Activated CD4-positive, alpha-beta T cell treated with anti-CD3 and anti-CD28 coated beads, Interleukin-2, amount 10 ng/mL, durations not matched to agents 24 days and 14 days (primary cell): ENCODE measurements at regions of chr6 and their contacts with region 1.

Region 1: DNA sequence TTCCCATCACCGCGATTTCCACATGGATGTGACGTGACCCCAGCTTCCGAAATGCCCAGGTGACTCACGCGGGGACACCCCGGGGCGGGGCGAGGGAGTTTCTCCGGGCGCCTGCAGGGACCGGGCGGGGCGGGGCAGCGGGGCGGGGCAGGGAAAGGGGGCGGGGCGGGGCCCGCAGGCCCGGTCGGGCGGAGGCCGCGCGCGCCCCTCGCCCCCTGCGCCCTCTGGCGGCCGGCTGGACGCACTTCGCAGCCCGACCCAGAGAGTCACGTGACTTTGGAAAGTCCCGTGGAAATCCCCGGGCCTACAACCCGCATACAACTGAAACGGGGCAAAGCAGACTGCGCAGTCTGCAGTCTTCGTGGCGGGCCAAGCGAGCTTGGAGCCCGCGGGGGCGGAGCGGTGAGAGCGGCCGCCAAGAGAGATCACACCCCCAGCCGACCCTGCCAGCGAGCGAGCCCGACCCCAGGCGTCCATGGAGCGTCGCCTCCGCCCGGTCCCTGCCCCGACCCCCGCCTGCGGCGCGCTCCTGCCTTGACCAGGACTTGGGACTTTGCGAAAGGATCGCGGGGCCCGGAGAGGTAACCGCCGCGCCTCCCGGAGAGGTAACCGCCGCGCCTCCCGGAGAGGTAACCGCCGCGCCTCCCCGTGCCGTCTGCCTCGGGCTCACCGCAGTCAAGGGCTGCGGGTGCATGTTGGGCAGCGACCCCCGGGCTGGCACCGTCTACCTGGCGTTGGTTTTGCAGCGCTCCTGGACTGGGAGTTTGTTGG is at the start of gene TNFAIP3:
- DNase-seq: peak; percentile 99
- H3K4me3 Mint-ChIP-seq: peak within 1 kb of the TSS; percentile 87
- H3K27ac Mint-ChIP-seq: peak within 1 kb of the TSS; percentile 93
- H3K4me1 Mint-ChIP-seq: peaks cover 25% of the 10 kb centered on the region
- H3K27me3 Mint-ChIP-seq: no peaks in the 10 kb centered on the region
- total RNA-seq, gene TNFAIP3: 249 and 254 TPM in 2 replicates

Region 2: GRCh38 chr6:137791281-137792159 is 75.6 kb before region 1 on chr6:
- intact Hi-C with region 1: loop called (anchors 1 kb)
- DNase-seq: no peak
- H3K4me3 Mint-ChIP-seq: peak overlapping the region; percentile 29
- H3K27ac Mint-ChIP-seq: peak overlapping the region; percentile 78
- H3K4me1 Mint-ChIP-seq: peaks cover 62% of the 10 kb centered on the region
- H3K27me3 Mint-ChIP-seq: no peaks in the 10 kb centered on the region

Region 3: GRCh38 chr6:137799950-137800568 is 67.0 kb before region 1 on chr6:
- intact Hi-C with region 1: loop called (anchors 1 kb)
- DNase-seq: peak; percentile 83
- H3K4me3 Mint-ChIP-seq: peak overlapping the region; percentile 18
- H3K27ac Mint-ChIP-seq: peak overlapping the region; percentile 81
- H3K4me1 Mint-ChIP-seq: peaks cover 54% of the 10 kb centered on the region
- H3K27me3 Mint-ChIP-seq: no peaks in the 10 kb centered on the region

Region 4: DNA sequence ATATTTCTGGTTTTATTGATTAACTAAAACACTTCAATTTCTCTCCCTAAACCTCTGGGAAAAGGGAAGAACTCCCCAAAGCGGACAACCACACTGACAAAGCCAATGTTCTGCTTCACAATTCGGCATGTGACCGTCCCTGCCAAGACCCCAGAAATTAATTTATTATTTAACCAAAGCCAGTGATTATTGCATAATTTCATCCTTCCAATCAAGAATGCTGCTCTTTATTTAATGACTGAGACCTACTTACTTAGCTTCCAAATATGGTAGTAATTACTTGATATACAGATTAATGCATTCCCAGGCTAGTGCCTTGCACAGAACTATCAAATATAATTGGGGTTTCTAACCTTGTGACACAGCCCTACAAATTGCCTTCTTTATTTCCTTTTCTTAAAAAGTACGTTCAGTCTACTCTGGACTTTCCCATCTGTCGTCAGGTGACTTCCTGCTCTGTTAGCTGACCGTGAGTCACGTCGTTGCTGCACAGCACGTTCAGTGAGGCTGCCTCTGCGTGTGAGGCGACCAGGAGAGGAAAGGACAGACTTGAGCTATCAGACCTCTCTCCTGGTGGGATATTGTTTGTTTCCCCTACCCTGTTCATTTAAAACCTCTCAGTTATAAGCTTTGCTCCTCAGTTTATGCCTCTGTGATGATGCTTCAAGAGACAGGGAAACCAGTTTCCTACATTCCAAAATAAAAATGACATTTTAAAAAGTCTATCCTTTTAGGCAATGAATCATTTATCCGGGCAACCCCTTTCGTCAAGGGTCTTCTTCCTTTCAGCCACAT is 55.8 kb before region 1 on chr6:
- intact Hi-C with region 1: loop called (anchors 1 kb)
- DNase-seq: peak; percentile 94
- H3K4me3 Mint-ChIP-seq: peak overlapping the region; percentile 2
- H3K27ac Mint-ChIP-seq: peak overlapping the region; percentile 55
- H3K4me1 Mint-ChIP-seq: peaks cover 55% of the 10 kb centered on the region
- H3K27me3 Mint-ChIP-seq: no peaks in the 10 kb centered on the region

Region 5: GRCh38 chr6:137849181-137849980 is 17.7 kb before region 1 on chr6:
- intact Hi-C with region 1: loop called (anchors 1 kb)
- DNase-seq: no peak
- H3K4me3 Mint-ChIP-seq: no peak overlapping the region
- H3K27ac Mint-ChIP-seq: peak overlapping the region; percentile 38
- H3K4me1 Mint-ChIP-seq: peaks cover 20% of the 10 kb centered on the region
- H3K27me3 Mint-ChIP-seq: no peaks in the 10 kb centered on the region

Region 6: DNA sequence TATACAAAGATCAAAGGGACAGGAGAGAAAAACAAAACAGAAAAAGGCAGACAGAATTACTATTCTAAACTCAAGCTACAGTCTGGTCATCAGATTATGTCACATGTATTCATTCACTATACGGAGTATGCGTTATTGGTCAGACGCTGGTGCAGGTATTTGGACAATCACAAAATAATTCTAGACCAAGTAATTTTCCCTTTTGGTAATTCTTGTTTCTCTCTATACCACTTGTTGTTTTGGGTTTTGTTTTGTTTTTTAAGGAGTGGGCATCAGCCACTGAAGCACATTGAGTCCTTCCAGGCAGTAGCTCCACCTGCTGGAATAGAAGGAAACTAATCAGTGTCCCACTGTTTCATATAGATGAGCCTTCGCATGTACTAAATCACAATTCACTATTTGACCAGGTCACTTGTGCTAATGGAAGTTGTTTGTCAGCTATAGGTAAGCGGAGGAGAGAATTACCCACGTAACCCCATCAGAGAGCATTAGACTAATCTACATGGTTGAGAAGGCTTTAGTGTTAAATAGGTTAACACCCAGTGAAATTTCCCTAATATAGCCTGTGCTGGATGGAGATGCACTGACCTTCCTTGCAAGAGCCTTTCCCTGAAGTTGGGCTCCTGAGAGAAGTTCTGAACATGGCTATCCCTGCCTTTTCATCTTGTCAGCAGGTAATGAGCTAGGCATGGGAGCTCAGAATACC is 77.8 kb after region 1 on chr6:
- intact Hi-C with region 1: loop called (anchors 1 kb)
- DNase-seq: peak; percentile 77
- H3K4me3 Mint-ChIP-seq: peak overlapping the region; percentile 23
- H3K27ac Mint-ChIP-seq: peak overlapping the region; percentile 81
- H3K4me1 Mint-ChIP-seq: peaks cover 57% of the 10 kb centered on the region
- H3K27me3 Mint-ChIP-seq: no peaks in the 10 kb centered on the region

Region 7: DNA sequence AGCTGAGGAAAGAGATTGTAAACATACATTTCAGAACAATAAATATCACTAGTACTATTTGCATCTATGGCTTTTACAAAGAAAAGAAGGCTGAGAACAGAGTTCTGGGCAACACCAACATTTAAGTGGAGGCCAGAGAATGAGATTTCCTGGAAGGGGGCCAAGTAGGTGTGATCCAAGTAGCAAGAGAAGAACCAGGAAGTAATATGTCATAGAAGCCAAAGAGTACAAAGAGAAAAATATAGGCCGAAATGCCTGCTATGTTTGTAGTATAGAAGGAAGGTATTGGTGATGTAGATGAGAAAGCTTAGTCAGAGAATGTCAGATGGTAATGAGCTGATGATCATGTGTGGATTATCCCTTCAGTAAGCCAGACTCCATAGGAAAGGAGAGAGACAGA is 145.6 kb after region 1 on chr6:
- intact Hi-C with region 1: no loop called
- DNase-seq: no peak
- H3K4me3 Mint-ChIP-seq: no peak overlapping the region
- H3K27ac Mint-ChIP-seq: no peak overlapping the region
- H3K4me1 Mint-ChIP-seq: no peaks in the 10 kb centered on the region
- H3K27me3 Mint-ChIP-seq: no peaks in the 10 kb centered on the region